Breast epithelium (tissue), 4 donors: ENCODE measurements at regions of chr1 and their contacts with region 1.

Region 1: GRCh38 chr1:207032528-207033017 is at the start of gene C1orf116:
- DNase-seq: peak in 1 of 2 donors; percentile 91
- H3K4me3 ChIP-seq: peak within 1 kb of the TSS in 2 of 3 donors; percentile 57
- H3K27ac ChIP-seq: peak within 1 kb of the TSS; percentile 81 to 93
- H3K4me1 ChIP-seq: no peaks in the 10 kb centered on the region
- H3K27me3 ChIP-seq: no peaks in the 10 kb centered on the region
- CTCF ChIP-seq: no peak
- POLR2A ChIP-seq: peak; percentile 31
- total RNA-seq, gene C1orf116: under 0.01 to 22.2 (median 5.6) TPM

Region 2: DNA sequence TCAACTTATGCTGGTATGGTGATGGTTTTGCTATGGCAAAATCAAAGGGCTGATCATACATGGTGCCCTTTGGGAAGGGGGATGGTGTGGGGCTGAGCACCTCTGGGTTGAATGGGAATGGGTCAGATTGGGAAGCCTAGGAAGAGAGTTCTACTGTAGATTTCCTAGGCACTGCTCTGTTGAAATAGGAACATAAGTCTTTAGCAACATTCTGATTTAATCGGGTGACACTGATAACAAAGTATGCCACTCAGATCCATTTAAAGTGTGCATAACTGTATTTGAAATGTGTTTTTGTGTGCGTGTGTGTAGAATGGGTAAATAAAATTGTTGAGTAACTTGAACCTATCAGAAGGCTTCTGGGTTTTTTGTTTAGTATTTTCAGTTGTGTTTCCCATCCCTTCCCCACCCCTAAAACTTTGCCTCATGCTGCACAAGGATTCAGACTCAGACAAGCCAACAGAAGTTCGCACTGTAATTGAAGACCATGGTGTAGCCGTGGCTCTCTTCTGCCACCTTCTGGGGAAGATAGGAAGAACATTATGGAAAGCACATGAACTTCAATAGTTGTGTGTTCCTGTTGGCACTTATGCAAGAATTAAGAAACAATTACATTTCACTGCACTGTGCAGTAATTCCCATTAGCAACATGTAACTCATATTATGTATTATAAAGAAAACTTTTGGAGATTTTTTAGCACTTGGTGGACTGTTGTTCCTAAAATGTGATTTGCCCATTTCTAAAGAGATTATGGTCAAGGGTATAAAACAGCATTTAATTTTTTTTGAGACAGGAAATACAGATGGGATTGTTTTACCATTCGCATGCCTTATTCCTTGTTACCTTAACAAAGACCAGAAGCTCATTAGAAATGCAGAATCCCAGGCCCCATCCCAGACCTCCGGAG is 45.2 kb after region 1 on chr1:
- intact Hi-C with region 1: loop called (anchors 2 kb)
- DNase-seq: peak in 1 of 2 donors; percentile 67
- H3K4me3 ChIP-seq: no peak overlapping the region
- H3K27ac ChIP-seq: no peak overlapping the region
- H3K4me1 ChIP-seq: peaks cover 0 to 4% of the 10 kb centered on the region in 2 donors
- H3K27me3 ChIP-seq: no peaks in the 10 kb centered on the region
- CTCF ChIP-seq: peak; percentile 68 to 90 (median 88)
- POLR2A ChIP-seq: no peak

Region 3: GRCh38 chr1:207134581-207134980 is 102.0 kb after region 1 on chr1:
- intact Hi-C with region 1: no loop called
- DNase-seq: no peak
- H3K4me3 ChIP-seq: no peak overlapping the region
- H3K27ac ChIP-seq: no peak overlapping the region
- H3K4me1 ChIP-seq: no peaks in the 10 kb centered on the region
- H3K27me3 ChIP-seq: no peaks in the 10 kb centered on the region
- CTCF ChIP-seq: no peak
- POLR2A ChIP-seq: no peak

Region 4: DNA sequence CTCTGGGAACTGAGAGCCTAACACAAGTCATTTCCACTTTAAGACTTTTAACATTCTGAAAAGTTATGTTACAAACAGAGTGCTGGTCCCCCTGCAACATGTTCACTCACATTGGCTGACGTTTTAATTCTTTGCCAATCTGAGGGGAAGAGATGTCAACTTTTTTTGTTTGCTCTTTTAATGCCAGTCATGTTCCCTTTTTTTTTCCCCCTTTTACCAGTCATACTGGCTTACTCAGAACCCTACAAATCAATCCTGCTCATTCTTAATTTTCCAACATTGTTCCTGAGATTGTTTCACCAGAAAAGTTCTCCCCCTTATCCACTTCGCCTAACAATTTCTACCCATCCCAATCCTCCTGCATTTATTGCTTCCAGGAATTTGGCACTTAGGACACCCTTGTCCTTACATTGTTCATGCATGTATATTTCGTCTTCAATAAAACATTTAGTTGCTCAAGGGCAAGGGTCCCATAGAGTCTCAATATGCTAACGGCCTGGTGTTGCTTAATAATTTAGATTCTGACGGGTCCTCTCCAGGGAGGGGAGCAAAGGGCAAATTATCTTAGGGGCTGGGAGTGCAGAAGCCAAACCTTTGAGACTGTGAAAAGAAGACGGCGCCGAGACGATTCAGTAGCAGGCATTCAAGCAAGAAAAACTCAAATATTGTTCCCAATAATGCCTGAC is 611.7 kb after region 1 on chr1:
- intact Hi-C with region 1: loop called (anchors 5 kb)
- DNase-seq: no peak
- H3K4me3 ChIP-seq: peak overlapping the region; percentile 51 to 76 (median 58)
- H3K27ac ChIP-seq: no peak overlapping the region
- H3K4me1 ChIP-seq: no peaks in the 10 kb centered on the region
- H3K27me3 ChIP-seq: no peaks in the 10 kb centered on the region
- CTCF ChIP-seq: no peak
- POLR2A ChIP-seq: no peak